Body of pancreas (tissue), 4 donors: ENCODE measurements at regions of chr22 and their contacts with region 1.

Region 1: GRCh38 chr22:28009272-28009827 is 90.3 kb upstream of the PITPNB start:
- DNase-seq: peak; percentile 77 to 83 (median 78)
- ATAC-seq: peak; percentile 86
- H3K4me3 ChIP-seq: no peak overlapping the region
- H3K27ac ChIP-seq: no peak overlapping the region
- H3K4me1 ChIP-seq: peaks cover 5% of the 10 kb centered on the region
- H3K27me3 ChIP-seq: no peaks in the 10 kb centered on the region
- CTCF ChIP-seq: peak; percentile 83 to 95 (median 93)
- POLR2A ChIP-seq: no peak

Region 2: DNA sequence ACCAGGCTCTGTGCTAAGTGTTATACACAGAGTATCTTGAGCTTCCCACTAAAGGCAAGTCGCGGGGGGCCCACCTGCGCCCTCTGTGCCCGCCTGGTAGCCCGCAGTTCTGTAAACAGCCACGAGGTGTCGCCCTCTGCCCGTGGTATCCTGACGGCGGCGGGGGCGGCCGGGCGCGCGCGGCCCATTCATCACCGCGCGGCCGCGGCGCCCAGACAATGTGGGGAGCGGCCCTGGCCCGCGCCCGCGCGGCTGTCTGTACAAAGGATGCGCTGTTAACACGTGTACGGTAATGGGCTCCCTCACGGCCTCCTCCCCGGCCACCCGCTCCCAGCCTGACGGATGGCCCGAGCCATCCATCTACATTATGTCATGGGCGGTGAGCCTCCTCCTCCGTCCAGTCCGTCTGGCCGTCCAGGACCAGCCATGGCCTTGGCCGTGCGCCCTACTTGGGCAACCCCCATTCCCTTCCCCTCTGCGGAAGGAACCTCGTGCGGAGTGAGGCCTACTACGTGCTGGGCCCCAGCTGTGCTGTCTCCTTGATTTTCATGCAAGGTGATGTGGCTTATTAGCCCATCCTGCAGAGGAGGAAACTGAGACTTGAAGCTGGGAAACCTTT is 1252.6 kb before region 1 on chr22:
- intact Hi-C with region 1: loop called (anchors 10 kb)
- DNase-seq: peak; percentile 9 to 54 (median 50)
- ATAC-seq: peak; percentile 61
- H3K4me3 ChIP-seq: no peak overlapping the region
- H3K27ac ChIP-seq: no peak overlapping the region
- H3K4me1 ChIP-seq: no peaks in the 10 kb centered on the region
- H3K27me3 ChIP-seq: no peaks in the 10 kb centered on the region
- CTCF ChIP-seq: peak; percentile 56 to 83 (median 65)
- POLR2A ChIP-seq: no peak